CD8-positive, alpha-beta T cell (primary cell): ENCODE measurements at regions of chr9 and their contacts with region 1.

Region 1: GRCh38 chr9:33139421-33140228 is 27.5 kb downstream of the B4GALT1 start:
- DNase-seq: peak in 1 of 9 experiments; percentile 45
- ATAC-seq: no peak
- H3K4me3 ChIP-seq: no peak overlapping the region
- H3K4me3 Mint-ChIP-seq: peak overlapping the region; percentile 56
- H3K27ac ChIP-seq: peak overlapping the region in 1 of 2 experiments; percentile 81
- H3K27ac Mint-ChIP-seq: peak overlapping the region; percentile 83
- H3K4me1 ChIP-seq: peaks cover 93% of the 10 kb centered on the region
- H3K4me1 Mint-ChIP-seq: peaks cover 93% of the 10 kb centered on the region
- H3K27me3 ChIP-seq: no peaks in the 10 kb centered on the region
- H3K27me3 Mint-ChIP-seq: no peaks in the 10 kb centered on the region
- CTCF ChIP-seq: no peak

Region 2: GRCh38 chr9:33153666-33154065 is 14.0 kb after region 1 on chr9:
- CTCF ChIA-PET with region 1: interaction called, 3 read pairs
- POLR2A ChIA-PET with region 1: interaction called, 10 read pairs
- intact Hi-C with region 1: loop called in 1 of 2 experiments (anchors 2 kb)
- DNase-seq: no peak
- ATAC-seq: no peak
- H3K4me3 ChIP-seq: peak overlapping the region in 1 of 2 experiments; percentile 12
- H3K4me3 Mint-ChIP-seq: peak overlapping the region; percentile 70
- H3K27ac ChIP-seq: peak overlapping the region; percentile 24 to 71
- H3K27ac Mint-ChIP-seq: peak overlapping the region; percentile 90
- H3K4me1 ChIP-seq: peaks cover 74% of the 10 kb centered on the region
- H3K4me1 Mint-ChIP-seq: peaks cover 81% of the 10 kb centered on the region
- H3K27me3 ChIP-seq: no peaks in the 10 kb centered on the region
- H3K27me3 Mint-ChIP-seq: no peaks in the 10 kb centered on the region
- CTCF ChIP-seq: no peak